CD4-positive, alpha-beta T cell (primary cell): ENCODE measurements at regions of chr1 and their contacts with region 1.

Region 1: DNA sequence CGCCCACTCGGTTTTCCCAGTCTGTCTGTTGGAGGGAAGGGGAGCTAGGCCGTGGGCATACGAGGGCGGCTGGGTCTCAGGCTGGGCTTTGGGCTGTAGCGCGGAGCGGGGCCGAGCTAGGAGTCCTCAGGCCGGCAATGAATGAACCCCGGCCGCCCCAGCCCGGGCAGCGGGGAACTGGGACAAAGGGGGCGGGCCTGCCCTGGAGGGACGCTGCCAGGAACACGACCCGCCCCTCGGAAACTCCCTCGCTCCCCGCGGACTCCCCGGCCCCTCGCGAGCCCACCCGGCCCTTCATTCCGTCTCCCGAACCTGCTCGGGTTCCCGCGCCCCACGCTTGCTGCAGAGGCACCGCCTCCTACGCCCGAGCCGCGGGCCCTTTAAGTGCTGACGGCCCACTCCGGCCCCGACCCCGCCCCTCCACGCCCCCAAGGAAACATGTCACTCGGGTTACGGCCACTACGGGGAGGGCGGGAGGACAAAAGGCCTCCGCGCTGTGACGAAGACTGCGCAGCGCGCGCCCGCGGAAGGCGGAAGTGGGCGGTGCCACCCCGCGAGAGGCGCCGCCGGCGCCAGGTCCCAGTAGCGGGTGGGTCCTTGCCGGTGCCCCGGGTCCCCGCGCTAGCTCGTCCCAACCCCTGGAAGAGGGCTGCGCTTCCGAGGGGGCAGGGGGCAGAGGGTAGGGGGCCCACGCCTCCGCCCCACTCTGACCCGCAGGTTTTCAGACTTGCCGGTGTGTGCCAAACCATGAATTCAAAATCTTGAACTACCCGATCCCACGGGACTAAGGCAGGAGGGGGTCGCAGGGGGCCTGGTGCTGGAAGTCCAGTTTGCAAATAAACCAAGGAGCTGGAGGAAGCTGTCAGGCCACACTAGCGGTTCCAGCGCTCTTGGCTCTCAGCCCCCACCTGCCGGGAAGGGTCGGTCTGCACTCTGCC is at the start of gene GALE:
- DNase-seq: peak; percentile 94 to 99 (median 97)
- ATAC-seq: peak; percentile 90
- H3K4me3 ChIP-seq: peak within 1 kb of the TSS; percentile 81
- H3K4me3 Mint-ChIP-seq: peak within 1 kb of the TSS; percentile 97
- H3K27ac ChIP-seq: peak within 1 kb of the TSS; percentile 78 to 82
- H3K27ac Mint-ChIP-seq: peak within 1 kb of the TSS; percentile 92
- H3K4me1 ChIP-seq: peaks cover 27% of the 10 kb centered on the region
- H3K4me1 Mint-ChIP-seq: peaks cover 14% of the 10 kb centered on the region
- H3K27me3 ChIP-seq: no peaks in the 10 kb centered on the region
- H3K27me3 Mint-ChIP-seq: no peaks in the 10 kb centered on the region
- CTCF ChIP-seq: no peak
- total RNA-seq, gene GALE: 5.4 to 6.9 TPM

Region 2: GRCh38 chr1:23772049-23772853 is 28.4 kb before region 1 on chr1:
- CTCF ChIA-PET with region 1: interaction called, 13 read pairs
- POLR2A ChIA-PET with region 1: interaction called, 16 read pairs
- intact Hi-C with region 1: no loop called
- DNase-seq: peak; percentile 75 to 89 (median 82)
- ATAC-seq: peak; percentile 97
- H3K4me3 ChIP-seq: no peak overlapping the region
- H3K4me3 Mint-ChIP-seq: peak overlapping the region; percentile 34
- H3K27ac ChIP-seq: no peak overlapping the region
- H3K27ac Mint-ChIP-seq: peak overlapping the region; percentile 15
- H3K4me1 ChIP-seq: peaks cover 6% of the 10 kb centered on the region
- H3K4me1 Mint-ChIP-seq: peaks cover 21% of the 10 kb centered on the region
- H3K27me3 ChIP-seq: no peaks in the 10 kb centered on the region
- H3K27me3 Mint-ChIP-seq: no peaks in the 10 kb centered on the region
- CTCF ChIP-seq: peak; percentile 95

Region 3: DNA sequence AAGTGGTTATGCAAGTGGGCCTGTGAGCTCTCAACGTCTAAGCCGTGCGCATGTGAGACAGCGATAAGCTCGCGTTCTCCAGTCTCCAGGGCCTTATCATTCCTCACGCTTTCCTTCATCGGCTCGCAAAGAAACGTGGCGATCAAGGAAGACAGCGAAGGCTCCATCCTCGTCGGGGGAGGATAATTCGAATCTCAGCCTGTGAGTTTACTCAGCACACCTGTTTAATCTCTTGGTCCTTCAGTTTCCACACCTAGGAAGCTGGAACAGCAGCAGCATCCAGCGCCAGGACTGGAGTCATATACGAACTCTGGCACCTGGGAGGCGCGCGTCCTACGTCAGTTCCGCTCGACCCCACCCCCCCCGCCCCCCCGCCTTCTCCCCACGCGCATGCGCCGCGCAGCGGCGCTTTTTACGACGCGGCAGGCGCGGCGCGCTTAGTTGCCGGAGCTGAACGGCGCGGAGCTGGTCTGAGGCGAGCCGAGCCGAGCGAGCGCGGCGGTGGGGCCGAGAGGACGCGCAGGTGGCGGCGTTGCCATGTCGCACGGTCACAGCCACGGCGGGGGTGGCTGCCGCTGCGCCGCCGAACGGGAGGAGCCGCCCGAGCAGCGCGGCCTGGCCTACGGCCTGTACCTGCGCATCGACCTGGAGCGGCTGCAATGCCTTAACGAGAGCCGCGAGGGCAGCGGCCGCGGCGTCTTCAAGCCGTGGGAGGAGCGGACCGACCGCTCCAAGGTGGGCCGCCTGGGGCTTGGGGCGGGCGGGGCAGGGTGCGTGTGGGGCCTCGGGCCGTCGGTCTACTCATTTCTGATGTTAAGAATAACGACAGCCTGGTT is 22.5 kb before region 1 on chr1 and contains the start of gene PITHD1:
- CTCF ChIA-PET with region 1: no interaction called
- POLR2A ChIA-PET with region 1: interaction called, 16 read pairs
- intact Hi-C with region 1: loop called in 1 of 2 experiments (anchors 1 kb)
- DNase-seq: peak; percentile 58 to 94 (median 78)
- ATAC-seq: peak; percentile 80
- H3K4me3 ChIP-seq: peak within 1 kb of the TSS; percentile 80
- H3K4me3 Mint-ChIP-seq: peak within 1 kb of the TSS; percentile 92
- H3K27ac ChIP-seq: peak within 1 kb of the TSS; percentile 81 to 89
- H3K27ac Mint-ChIP-seq: peak within 1 kb of the TSS; percentile 98
- H3K4me1 ChIP-seq: peaks cover 34% of the 10 kb centered on the region
- H3K4me1 Mint-ChIP-seq: peaks cover 46% of the 10 kb centered on the region
- H3K27me3 ChIP-seq: no peaks in the 10 kb centered on the region
- H3K27me3 Mint-ChIP-seq: no peaks in the 10 kb centered on the region
- CTCF ChIP-seq: no peak
- total RNA-seq, gene PITHD1: 110 to 111 TPM

Region 4: GRCh38 chr1:23838401-23838866 is 37.8 kb after region 1 on chr1:
- CTCF ChIA-PET with region 1: no interaction called
- POLR2A ChIA-PET with region 1: interaction called, 3 read pairs
- intact Hi-C with region 1: loop called in 1 of 2 experiments (anchors 5 kb)
- DNase-seq: peak; percentile 63 to 89 (median 70)
- ATAC-seq: peak; percentile 99
- H3K4me3 ChIP-seq: peak overlapping the region; percentile 38
- H3K4me3 Mint-ChIP-seq: peak overlapping the region; percentile 65
- H3K27ac ChIP-seq: no peak overlapping the region
- H3K27ac Mint-ChIP-seq: no peak overlapping the region
- H3K4me1 ChIP-seq: peaks cover 10% of the 10 kb centered on the region
- H3K4me1 Mint-ChIP-seq: peaks cover 12% of the 10 kb centered on the region
- H3K27me3 ChIP-seq: no peaks in the 10 kb centered on the region
- H3K27me3 Mint-ChIP-seq: peaks cover 11% of the 10 kb centered on the region
- CTCF ChIP-seq: no peak